ENCODE measurements at regions of chr1 and their contacts with region 1.

Region 1: GRCh38 chr1:64060611-64061302 is 142.7 kb upstream of the UBE2U start:
- DNase-seq: no peak

Region 2: DNA sequence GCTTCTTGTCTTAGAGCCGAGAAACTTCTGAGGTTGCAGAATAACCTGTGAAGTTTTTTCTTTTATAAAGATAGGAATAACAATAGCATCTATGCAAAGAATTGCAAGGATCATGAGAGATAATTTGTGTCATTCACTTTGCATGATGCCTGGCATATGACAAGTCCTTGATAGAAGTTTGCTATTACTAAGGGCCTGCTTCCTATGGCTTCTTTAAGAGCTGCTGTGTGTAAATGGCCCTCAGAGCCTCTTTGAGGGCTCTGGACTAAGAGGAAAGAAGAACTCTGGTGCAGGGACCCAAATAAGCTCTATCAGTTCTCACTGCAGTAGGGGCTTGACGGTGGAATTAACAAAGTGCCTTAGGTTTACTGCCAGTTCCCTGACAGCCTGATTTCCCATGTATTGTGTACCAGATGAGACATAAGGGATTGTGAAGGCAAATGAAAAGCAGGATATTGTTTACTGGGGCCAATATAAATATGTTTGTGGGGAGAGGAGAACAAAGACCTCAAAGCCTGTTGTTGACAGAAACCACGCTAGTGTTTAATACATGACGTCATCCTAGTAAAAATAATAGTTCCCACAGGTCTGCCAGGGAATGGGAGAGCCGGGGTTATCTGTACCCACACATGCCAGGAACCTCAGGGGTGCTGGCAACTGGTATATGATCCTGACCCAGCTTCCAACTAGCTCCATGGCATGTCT is 11.5 kb after region 1 on chr1:
- intact Hi-C with region 1: loop called (anchors 1 kb)
- DNase-seq: no peak